ENCODE measurements at regions of chr12 and their contacts with region 1.

Region 1: GRCh38 chr12:56688129-56688845 is at the start of gene PTGES3:
- DNase-seq: peak; percentile 98
- H3K4me3 Mint-ChIP-seq: peak within 1 kb of the TSS; percentile 100
- H3K27ac Mint-ChIP-seq: peak within 1 kb of the TSS; percentile 100
- H3K4me1 Mint-ChIP-seq: peaks cover 23% of the 10 kb centered on the region
- H3K27me3 Mint-ChIP-seq: no peaks in the 10 kb centered on the region
- total RNA-seq, gene PTGES3: 301 and 302 TPM in 2 replicates

Region 2: DNA sequence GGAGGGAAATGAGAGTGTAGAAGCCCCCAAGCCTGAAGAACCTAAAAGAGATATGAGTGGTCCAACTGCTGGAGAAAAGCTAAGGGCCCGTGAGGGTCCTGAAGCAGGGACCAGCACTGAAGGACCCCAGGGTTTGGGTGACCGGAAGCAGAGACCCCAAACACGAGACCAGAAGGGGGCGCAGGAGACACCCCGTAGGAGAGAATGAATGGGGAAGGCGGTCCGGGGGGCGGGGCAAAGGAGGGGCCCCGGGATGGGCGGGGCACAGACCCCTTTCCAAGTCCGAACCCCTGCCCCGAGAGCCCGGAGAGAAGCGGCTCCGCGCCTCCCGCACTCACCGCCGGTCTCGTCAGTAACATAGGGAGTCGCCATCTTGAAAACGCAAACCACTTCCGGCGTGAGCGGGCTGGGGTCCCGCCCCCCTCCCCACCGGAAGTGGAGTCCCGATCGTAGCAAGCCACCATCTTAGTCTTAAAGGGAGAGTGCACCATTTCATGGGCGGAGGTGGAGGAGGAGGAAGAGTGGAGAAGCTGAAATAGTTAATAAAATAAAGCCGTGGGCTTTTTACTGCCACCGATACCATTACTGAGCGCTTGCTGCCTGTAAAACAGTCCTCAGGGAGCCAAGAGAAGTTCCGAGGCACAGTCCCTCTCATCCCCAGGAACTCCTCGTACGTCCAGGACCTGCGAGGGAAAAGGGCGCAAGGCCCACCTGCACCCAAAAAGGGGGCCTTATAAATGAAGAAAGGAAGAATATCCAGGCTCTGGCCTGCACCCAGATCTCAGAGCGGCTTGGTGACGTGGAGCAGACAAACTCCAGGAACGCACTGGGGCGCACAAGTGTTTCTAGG is 761.3 kb before region 1 on chr12:
- intact Hi-C with region 1: loop called (anchors 5 kb)
- DNase-seq: peak; percentile 85
- H3K4me3 Mint-ChIP-seq: peak overlapping the region; percentile 90
- H3K27ac Mint-ChIP-seq: peak overlapping the region; percentile 96
- H3K4me1 Mint-ChIP-seq: peaks cover 52% of the 10 kb centered on the region
- H3K27me3 Mint-ChIP-seq: no peaks in the 10 kb centered on the region

Region 3: GRCh38 chr12:56359851-56360767 is 328.2 kb before region 1 on chr12 and contains the start of gene STAT2:
- intact Hi-C with region 1: loop called (anchors 1 kb)
- DNase-seq: peak; percentile 100
- H3K4me3 Mint-ChIP-seq: peak within 1 kb of the TSS; percentile 97
- H3K27ac Mint-ChIP-seq: peak within 1 kb of the TSS; percentile 97
- H3K4me1 Mint-ChIP-seq: peaks cover 29% of the 10 kb centered on the region
- H3K27me3 Mint-ChIP-seq: no peaks in the 10 kb centered on the region
- total RNA-seq, gene STAT2: 70.2 and 71.3 TPM in 2 replicates

Region 4: DNA sequence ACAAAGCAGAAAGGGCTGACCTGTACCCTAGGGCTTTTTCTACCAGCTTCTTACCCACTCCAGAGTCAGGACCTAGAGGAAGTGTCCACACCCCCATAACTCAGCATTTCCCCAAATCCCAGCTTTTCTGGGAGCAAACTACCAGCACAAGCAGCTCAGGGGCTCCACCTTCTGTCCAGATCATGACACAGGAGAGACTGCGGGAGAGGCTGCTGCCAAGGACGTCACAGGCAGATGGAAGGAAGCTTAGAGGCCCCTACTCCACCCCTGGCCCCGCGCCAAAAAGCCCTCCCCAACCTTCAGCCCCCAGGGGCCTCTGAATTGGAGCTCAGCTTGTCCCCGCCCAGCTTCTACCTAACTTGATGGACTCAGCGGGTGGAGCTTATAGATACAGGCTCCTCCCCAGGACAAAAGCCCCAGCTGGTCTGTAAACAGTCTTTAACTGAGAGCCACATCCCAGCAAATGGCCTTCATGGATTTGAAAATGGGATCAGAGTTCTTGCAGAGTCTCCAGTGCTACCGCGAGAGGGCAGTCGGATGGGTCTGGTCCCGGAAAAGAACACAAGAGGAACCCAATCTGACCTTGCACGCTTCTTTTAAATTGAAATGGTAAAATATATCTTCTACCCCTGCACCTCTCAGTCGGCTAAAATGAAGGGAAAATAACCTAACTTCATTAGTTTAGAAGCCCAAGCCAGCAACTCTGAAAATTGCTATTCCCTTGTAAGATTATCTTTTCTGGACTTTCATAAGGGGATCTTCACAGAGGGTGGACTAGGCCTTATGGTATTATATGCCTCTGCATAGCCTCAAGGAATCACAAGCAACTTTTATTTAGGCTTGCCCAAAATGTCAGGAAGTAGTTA is 51.4 kb before region 1 on chr12:
- intact Hi-C with region 1: loop called (anchors 1 kb)
- DNase-seq: peak; percentile 79
- H3K4me3 Mint-ChIP-seq: peak overlapping the region; percentile 98
- H3K27ac Mint-ChIP-seq: peak overlapping the region; percentile 92
- H3K4me1 Mint-ChIP-seq: peaks cover 62% of the 10 kb centered on the region
- H3K27me3 Mint-ChIP-seq: no peaks in the 10 kb centered on the region

Region 5: GRCh38 chr12:56724972-56725722 is 36.9 kb after region 1 on chr12 and contains the start of gene NACA:
- intact Hi-C with region 1: loop called (anchors 1 kb)
- DNase-seq: peak; percentile 98
- H3K4me3 Mint-ChIP-seq: peak within 1 kb of the TSS; percentile 91
- H3K27ac Mint-ChIP-seq: peak within 1 kb of the TSS; percentile 91
- H3K4me1 Mint-ChIP-seq: peaks cover 48% of the 10 kb centered on the region
- H3K27me3 Mint-ChIP-seq: peaks cover 1% of the 10 kb centered on the region
- total RNA-seq, gene NACA: 942 and 963 TPM in 2 replicates

Region 6: GRCh38 chr12:57520053-57520871 is 832.0 kb after region 1 on chr12 and contains the start of gene DDIT3:
- intact Hi-C with region 1: loop called (anchors 5 kb)
- DNase-seq: peak; percentile 99
- H3K4me3 Mint-ChIP-seq: peak within 1 kb of the TSS; percentile 97
- H3K27ac Mint-ChIP-seq: peak within 1 kb of the TSS; percentile 100
- H3K4me1 Mint-ChIP-seq: peaks cover 62% of the 10 kb centered on the region
- H3K27me3 Mint-ChIP-seq: no peaks in the 10 kb centered on the region
- total RNA-seq, gene DDIT3: 17.8 and 18.1 TPM in 2 replicates

Measured in activated T-helper 1 cell treated with anti-CD3 and anti-CD28 coated beads, Interleukin-12 subunit alpha, Interleukin-12 subunit beta, Interleukin-2, Interleukin-4 antibody, amounts not matched to agents 30 ng/mL and 10 ng/mL and 1 ng/mL, durations not matched to agents 14 hours and 24 hours and 36 hours (primary cell).